Posterior vena cava (tissue), 2 donors: ENCODE measurements at regions of chrX and their contacts with region 1.

Region 1: DNA sequence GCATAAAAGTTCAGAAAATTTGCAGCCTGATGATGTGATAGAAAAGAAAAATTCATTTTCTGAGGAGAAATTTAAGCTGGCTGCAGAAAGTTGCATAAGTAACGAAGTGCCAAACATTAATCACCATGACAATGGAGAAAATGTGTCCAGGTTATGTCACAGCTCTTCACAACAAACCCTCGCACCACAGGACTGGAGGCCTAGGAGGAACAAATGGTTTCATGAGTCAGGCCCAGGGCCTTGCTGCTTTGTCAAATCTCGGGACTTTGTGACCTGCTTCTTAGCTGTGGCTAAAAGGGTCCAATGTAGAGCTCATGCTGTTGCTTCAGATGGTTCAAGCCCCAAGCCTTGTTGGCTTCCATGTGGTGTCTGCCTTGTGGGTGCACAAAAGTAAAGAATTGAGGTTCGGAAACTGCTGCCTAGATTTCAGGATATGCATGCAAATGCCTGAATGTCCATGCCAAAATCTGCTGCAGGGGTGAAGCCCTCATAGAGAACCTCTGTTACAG is 527.4 kb downstream of the SH3BGRL start:
- DNase-seq: no peak

Region 2: DNA sequence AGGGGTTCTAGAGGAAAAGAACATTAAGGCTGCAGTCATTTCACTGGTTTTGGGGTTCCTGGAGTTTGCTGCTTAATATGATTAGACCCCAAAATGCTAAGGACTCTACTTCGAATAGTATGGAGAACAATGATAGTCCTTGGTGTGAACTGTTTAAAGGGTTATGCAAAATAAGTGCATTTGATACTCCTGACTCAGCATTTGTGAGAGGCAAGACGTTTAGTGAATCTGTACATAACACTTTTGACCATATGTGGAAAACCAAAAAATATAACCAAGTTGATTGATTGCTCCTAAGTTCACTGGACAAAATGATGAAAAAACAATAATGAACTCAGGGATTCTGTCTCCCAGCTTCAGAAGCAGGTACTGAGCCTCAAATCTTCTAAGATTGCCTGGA is 113.3 kb before region 1 on chrX:
- intact Hi-C with region 1: loop called in 1 of 2 experiments (anchors 10 kb)
- DNase-seq: no peak

Region 3: GRCh38 chrX:81708506-81708905 is 20.8 kb before region 1 on chrX:
- intact Hi-C with region 1: no loop called
- DNase-seq: no peak

Region 4: GRCh38 chrX:83319023-83319422 is 1589.7 kb after region 1 on chrX:
- intact Hi-C with region 1: no loop called
- DNase-seq: no peak